Posterior vena cava (tissue), 2 donors: ENCODE measurements at regions of chr5 and their contacts with region 1.

Region 1: DNA sequence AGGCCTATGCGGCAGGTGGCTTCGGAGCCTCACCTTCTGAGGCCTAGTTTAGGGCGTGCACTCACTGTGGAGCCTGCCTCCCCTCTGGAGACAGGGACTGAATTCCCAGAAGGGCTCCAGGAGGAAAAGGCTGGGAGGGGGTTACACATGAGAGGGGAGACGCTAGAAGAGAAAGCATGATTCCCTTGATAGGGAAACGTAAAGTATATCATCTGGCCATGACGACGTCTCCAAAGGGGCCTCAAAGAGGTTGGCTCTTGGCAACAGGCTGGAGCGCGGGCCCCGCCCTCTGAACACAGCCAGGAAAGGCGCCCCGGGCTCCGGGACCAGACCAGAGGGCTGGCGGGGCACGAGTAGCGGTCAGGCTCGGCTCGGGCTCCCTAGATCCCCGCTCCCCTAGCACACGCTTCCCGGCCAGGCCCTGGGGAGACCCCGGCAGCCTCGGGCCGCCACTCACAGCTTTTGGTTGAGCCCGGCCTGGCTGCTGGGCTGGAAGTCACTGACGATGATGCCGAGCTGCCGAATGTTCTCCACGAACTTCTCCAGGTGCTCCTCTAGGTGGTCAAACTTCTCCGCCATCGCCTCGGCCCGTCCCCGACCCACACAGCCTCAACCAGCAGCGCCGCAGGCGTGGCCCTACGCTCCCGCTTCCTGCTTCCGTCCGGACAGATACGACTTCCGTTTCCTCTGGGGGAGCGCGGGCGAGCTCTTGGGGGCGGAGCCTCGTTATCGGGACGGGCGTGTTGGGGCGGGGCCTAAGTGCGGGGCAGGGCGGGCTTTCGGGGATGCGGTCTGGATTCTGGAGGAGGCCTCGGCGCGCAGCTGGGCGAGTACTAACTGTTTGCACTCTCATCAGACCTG is at the start of gene MED10:
- DNase-seq: peak; percentile 99
- total RNA-seq, gene MED10: 28.5 to 36.5 TPM

Region 2: GRCh38 chr5:6576861-6577501 is 198.8 kb after region 1 on chr5:
- intact Hi-C with region 1: loop called in 1 of 2 experiments (anchors 10 kb)
- DNase-seq: no peak